Natural killer cell (primary cell): ENCODE measurements at regions of chr6 and their contacts with region 1.

Region 1: GRCh38 chr6:27472617-27473400 is at the start of gene ZNF184:
- DNase-seq: peak; percentile 84 to 92
- ATAC-seq: peak; percentile 78 to 94 (median 86)
- H3K4me3 ChIP-seq: peak within 1 kb of the TSS; percentile 65
- H3K4me3 Mint-ChIP-seq: peak within 1 kb of the TSS; percentile 96
- H3K27ac ChIP-seq: peak within 1 kb of the TSS; percentile 85
- H3K27ac Mint-ChIP-seq: peak within 1 kb of the TSS; percentile 94
- H3K4me1 ChIP-seq: peaks cover 17% of the 10 kb centered on the region
- H3K4me1 Mint-ChIP-seq: peaks cover 40 to 48% of the 10 kb centered on the region in 2 donors
- H3K27me3 ChIP-seq: no peaks in the 10 kb centered on the region
- H3K27me3 Mint-ChIP-seq: no peaks in the 10 kb centered on the region
- CTCF ChIP-seq: no peak
- total RNA-seq, gene ZNF184: 12.8 to 21.7 (median 16.2) TPM

Region 2: DNA sequence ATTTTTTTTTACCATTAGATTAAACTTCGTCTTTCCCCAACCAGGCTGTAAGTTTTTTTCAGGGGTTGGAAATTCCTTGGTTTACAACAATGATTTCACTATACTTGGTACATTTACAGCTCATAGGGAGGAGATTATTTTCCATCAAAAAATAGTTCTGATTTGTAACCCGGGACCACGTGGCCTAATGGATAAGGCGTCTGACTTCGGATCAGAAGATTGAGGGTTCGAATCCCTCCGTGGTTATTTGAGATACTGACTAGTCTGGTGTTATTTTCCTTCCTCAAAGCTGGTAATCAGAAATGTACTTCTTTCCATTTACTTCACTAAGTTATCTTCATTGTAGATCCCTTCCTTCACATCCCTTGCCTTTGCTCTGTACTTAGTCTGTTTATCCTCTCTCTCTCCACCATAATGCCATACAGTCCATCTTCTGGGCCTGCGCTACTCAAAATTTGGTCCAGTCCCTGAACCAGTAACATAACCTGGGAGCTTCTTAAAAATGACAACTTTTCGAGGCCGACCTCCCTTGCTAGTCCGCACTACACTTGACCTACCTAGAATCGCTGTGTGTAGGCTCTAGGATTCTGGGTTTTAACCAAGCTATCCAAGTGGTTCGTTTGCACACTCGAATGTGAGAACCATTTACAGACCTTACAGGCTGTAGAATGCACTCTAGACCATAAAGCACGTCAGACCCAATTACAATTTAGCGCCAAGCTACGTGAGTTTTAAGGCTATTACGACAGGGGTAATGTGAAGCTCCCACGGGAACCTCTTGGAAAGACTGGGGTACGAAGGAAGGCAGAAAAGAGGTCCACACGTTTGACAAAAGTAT is 1149.9 kb before region 1 on chr6:
- intact Hi-C with region 1: loop called (anchors 10 kb)
- DNase-seq: peak in 1 of 2 donors; percentile 85
- ATAC-seq: peak; percentile 72 to 76 (median 75)
- H3K4me3 ChIP-seq: peak overlapping the region; percentile 47
- H3K4me3 Mint-ChIP-seq: peak overlapping the region; percentile 68
- H3K27ac ChIP-seq: no peak overlapping the region
- H3K27ac Mint-ChIP-seq: peak overlapping the region; percentile 86 to 92
- H3K4me1 ChIP-seq: peaks cover 16% of the 10 kb centered on the region
- H3K4me1 Mint-ChIP-seq: peaks cover 25 to 27% of the 10 kb centered on the region in 2 donors
- H3K27me3 ChIP-seq: peaks cover 15% of the 10 kb centered on the region
- H3K27me3 Mint-ChIP-seq: peaks cover 32 to 38% of the 10 kb centered on the region in 2 donors
- CTCF ChIP-seq: no peak

Region 3: GRCh38 chr6:27132532-27133280 is 340.1 kb before region 1 on chr6:
- intact Hi-C with region 1: loop called (anchors 2 kb)
- DNase-seq: peak; percentile 87 to 98
- ATAC-seq: peak; percentile 82 to 95 (median 87)
- H3K4me3 ChIP-seq: peak overlapping the region; percentile 65
- H3K4me3 Mint-ChIP-seq: no peak overlapping the region
- H3K27ac ChIP-seq: peak overlapping the region; percentile 85
- H3K27ac Mint-ChIP-seq: no peak overlapping the region
- H3K4me1 ChIP-seq: peaks cover 29% of the 10 kb centered on the region
- H3K4me1 Mint-ChIP-seq: peaks cover 5 to 6% of the 10 kb centered on the region in 2 donors
- H3K27me3 ChIP-seq: no peaks in the 10 kb centered on the region
- H3K27me3 Mint-ChIP-seq: no peaks in the 10 kb centered on the region
- CTCF ChIP-seq: no peak

Region 4: DNA sequence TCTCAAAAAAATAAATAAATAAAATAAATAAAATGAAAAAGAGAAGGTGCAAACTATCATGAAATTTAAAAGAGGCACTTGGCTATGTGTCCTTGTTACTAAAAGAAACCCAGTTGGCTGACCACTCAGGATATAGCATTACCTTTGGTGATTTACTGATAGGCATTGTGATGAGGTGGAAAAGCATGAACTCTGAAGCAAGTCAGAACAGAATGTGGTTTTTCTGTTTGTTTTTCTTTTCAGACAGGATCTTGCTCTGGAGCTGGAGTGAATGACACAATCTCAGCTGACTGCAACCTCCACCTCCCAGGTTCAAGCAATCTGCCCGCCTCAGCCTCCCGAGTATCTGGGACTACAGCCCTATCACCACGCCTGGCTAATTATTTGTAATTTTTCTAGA is 31.8 kb before region 1 on chr6:
- intact Hi-C with region 1: no loop called
- DNase-seq: no peak
- ATAC-seq: no peak
- H3K4me3 ChIP-seq: no peak overlapping the region
- H3K4me3 Mint-ChIP-seq: no peak overlapping the region
- H3K27ac ChIP-seq: no peak overlapping the region
- H3K27ac Mint-ChIP-seq: no peak overlapping the region
- H3K4me1 ChIP-seq: no peaks in the 10 kb centered on the region
- H3K4me1 Mint-ChIP-seq: no peaks in the 10 kb centered on the region
- H3K27me3 ChIP-seq: no peaks in the 10 kb centered on the region
- H3K27me3 Mint-ChIP-seq: peaks cover 0 to 1% of the 10 kb centered on the region in 2 donors
- CTCF ChIP-seq: no peak

Region 5: DNA sequence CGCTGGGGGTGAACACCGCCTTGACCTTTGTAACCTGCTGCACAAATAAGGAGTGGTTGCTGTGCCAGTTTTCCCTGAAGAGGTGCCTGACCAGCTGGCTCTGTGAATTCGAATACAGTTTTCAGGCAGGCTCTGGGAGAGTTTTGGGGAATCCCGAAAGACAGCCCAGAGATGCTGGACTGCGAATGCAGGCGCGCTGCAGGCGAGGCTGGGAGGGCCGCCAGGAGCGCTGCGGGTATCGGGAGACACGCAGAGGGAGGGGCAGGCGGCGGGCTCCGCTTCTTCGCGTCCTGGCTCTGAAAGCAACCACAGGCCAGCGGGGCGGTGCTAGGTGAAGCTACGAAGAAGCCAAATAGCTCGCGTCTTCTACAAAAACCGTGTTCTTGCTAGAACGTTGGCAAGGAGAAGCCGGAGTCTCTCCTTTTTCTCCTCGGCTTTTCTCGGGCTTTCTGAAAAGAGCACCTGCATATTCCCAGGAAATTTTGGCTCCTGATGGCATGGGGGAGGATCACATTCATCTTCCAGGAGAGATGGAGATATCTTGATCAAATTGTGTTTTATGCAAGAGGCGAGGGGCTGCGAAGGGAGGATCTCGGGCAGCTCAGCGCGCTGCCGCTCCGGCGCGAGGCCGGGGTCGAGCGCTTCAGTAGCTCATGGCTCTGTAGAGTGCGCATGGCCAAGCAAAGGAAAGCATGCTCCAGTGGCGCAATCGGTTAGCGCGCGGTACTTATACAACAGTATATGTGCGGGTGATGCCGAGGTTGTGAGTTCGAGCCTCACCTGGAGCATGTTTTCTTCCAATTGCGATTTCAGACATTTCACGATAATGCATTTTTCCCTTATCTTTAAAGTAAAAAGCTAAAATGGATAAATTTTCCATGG is 158.2 kb after region 1 on chr6:
- intact Hi-C with region 1: no loop called
- DNase-seq: peak in 1 of 2 donors; percentile 14
- ATAC-seq: no peak
- H3K4me3 ChIP-seq: no peak overlapping the region
- H3K4me3 Mint-ChIP-seq: no peak overlapping the region
- H3K27ac ChIP-seq: no peak overlapping the region
- H3K27ac Mint-ChIP-seq: no peak overlapping the region
- H3K4me1 ChIP-seq: peaks cover 8% of the 10 kb centered on the region
- H3K4me1 Mint-ChIP-seq: no peaks in the 10 kb centered on the region
- H3K27me3 ChIP-seq: peaks cover 23% of the 10 kb centered on the region
- H3K27me3 Mint-ChIP-seq: peaks cover 42 to 65% of the 10 kb centered on the region in 2 donors
- CTCF ChIP-seq: no peak

Region 6: GRCh38 chr6:27687154-27688013 is 214.6 kb after region 1 on chr6:
- intact Hi-C with region 1: loop called (anchors 5 kb)
- DNase-seq: peak; percentile 67 to 88
- ATAC-seq: peak; percentile 75 to 83 (median 76)
- H3K4me3 ChIP-seq: peak overlapping the region; percentile 52
- H3K4me3 Mint-ChIP-seq: peak overlapping the region; percentile 95
- H3K27ac ChIP-seq: no peak overlapping the region
- H3K27ac Mint-ChIP-seq: peak overlapping the region; percentile 94 to 96
- H3K4me1 ChIP-seq: peaks cover 12% of the 10 kb centered on the region
- H3K4me1 Mint-ChIP-seq: peaks cover 14 to 22% of the 10 kb centered on the region in 2 donors
- H3K27me3 ChIP-seq: peaks cover 2% of the 10 kb centered on the region
- H3K27me3 Mint-ChIP-seq: peaks cover 8 to 32% of the 10 kb centered on the region in 2 donors
- CTCF ChIP-seq: peak; percentile 53

Region 7: DNA sequence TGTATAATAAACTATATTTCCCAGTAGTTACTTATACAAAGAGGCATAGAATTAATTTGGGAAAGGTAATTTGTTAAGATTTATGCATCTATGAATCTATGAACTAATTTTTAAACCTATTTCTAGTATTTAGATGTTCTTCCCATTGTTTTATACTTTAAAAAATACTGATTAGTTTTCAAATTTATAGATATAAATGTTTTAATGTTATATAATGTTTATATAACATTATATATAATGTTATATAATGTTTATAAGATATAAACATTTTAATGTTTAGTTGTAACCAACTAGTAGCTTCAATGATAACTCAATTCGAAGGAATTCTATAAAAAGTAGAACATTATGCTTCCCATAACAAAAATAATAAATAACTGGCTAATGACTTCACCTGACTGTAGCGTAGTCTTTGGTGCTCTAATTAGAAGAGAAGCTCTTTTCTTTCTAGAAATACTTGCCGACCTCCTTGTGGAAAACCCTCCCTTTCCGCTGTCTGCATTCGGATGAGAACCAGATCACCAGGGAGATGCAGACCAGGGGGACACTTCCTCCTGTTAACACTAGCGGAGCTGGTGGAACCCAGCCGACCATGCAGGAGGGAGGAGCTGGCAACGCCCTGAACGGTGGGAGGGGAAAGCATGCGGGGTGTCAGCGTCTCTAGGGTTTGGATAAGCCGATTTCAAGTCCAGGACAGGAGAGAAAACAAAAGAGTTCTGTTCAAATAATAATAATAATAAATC is 281.0 kb after region 1 on chr6:
- intact Hi-C with region 1: loop called (anchors 1 kb)
- DNase-seq: peak; percentile 19 to 75
- ATAC-seq: no peak
- H3K4me3 ChIP-seq: peak overlapping the region; percentile 81
- H3K4me3 Mint-ChIP-seq: peak overlapping the region; percentile 99
- H3K27ac ChIP-seq: no peak overlapping the region
- H3K27ac Mint-ChIP-seq: peak overlapping the region; percentile 95 to 100
- H3K4me1 ChIP-seq: peaks cover 15% of the 10 kb centered on the region
- H3K4me1 Mint-ChIP-seq: peaks cover 32 to 37% of the 10 kb centered on the region in 2 donors
- H3K27me3 ChIP-seq: no peaks in the 10 kb centered on the region
- H3K27me3 Mint-ChIP-seq: peaks cover 2 to 9% of the 10 kb centered on the region in 2 donors
- CTCF ChIP-seq: no peak

Region 8: GRCh38 chr6:28880894-28881780 is 1408.3 kb after region 1 on chr6:
- intact Hi-C with region 1: loop called (anchors 10 kb)
- DNase-seq: peak; percentile 60 to 74
- ATAC-seq: no peak
- H3K4me3 ChIP-seq: peak overlapping the region; percentile 32
- H3K4me3 Mint-ChIP-seq: peak overlapping the region; percentile 93
- H3K27ac ChIP-seq: no peak overlapping the region
- H3K27ac Mint-ChIP-seq: peak overlapping the region; percentile 84 to 96
- H3K4me1 ChIP-seq: peaks cover 31% of the 10 kb centered on the region
- H3K4me1 Mint-ChIP-seq: peaks cover 32 to 33% of the 10 kb centered on the region in 2 donors
- H3K27me3 ChIP-seq: peaks cover 6% of the 10 kb centered on the region
- H3K27me3 Mint-ChIP-seq: peaks cover 15 to 20% of the 10 kb centered on the region in 2 donors
- CTCF ChIP-seq: no peak